ENCODE measurements at regions of chr1 and their contacts with region 1.

Region 1: DNA sequence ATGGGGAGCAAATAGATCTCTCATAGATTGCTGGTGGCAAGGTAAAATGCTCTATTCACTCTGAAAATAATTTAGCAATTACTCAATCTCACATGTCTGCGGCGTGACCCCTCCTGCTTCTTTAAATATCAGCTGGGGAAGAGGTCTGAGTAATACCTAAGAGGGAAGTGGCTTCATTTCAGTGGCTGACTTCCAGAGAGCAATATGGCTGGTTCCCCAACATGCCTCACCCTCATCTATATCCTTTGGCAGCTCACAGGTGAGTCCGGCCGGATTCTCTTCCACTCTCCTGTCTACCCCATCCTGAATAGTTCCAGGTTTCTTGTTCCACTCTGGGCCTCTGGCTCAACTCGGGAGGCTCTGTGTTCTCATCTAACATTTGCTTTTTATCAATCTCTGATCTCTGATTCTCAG is at the start of gene SLAMF7:
- DNase-seq: no peak
- ATAC-seq: no peak
- H3K4me3 ChIP-seq: no peak within 1 kb of the TSS
- H3K27ac ChIP-seq: no peak within 1 kb of the TSS
- H3K4me1 ChIP-seq: no peaks in the 10 kb centered on the region
- H3K27me3 ChIP-seq: no peaks in the 10 kb centered on the region
- CTCF ChIP-seq: no peak
- POLR2A ChIP-seq: no peak
- RAD21 ChIP-seq: no peak
- total RNA-seq, gene SLAMF7: not detected in 2 replicates

Region 2: GRCh38 chr1:160675641-160676410 is 63.3 kb before region 1 on chr1:
- CTCF ChIA-PET with region 1: no interaction called
- POLR2A ChIA-PET with region 1: no interaction called
- dilution Hi-C with region 1: no loop called
- in situ Hi-C with region 1: loop called (anchors 10 kb)
- intact Hi-C with region 1: no loop called
- DNase-seq: peak; percentile 51
- ATAC-seq: peak; percentile 92
- H3K4me3 ChIP-seq: no peak overlapping the region
- H3K27ac ChIP-seq: no peak overlapping the region
- H3K4me1 ChIP-seq: no peaks in the 10 kb centered on the region
- H3K27me3 ChIP-seq: no peaks in the 10 kb centered on the region; the same call in 1 of the 2 replicates
- CTCF ChIP-seq: peak; percentile 65
- POLR2A ChIP-seq: no peak
- RAD21 ChIP-seq: peak; percentile 60

Measured in IMR-90 (cell line).